ENCODE measurements at regions of chr6 and their contacts with region 1.

Region 1: GRCh38 chr6:90296346-90297114 is at the start of gene BACH2:
- DNase-seq: peak; percentile 97
- ATAC-seq: peak; percentile 76
- H3K4me3 ChIP-seq: peak within 1 kb of the TSS; percentile 61 to 95 (median 79)
- H3K4me3 Mint-ChIP-seq: peak within 1 kb of the TSS; percentile 89
- H3K27ac ChIP-seq: peak within 1 kb of the TSS; percentile 94
- H3K27ac Mint-ChIP-seq: peak within 1 kb of the TSS; percentile 96
- H3K4me1 ChIP-seq: peaks cover 47 to 51% of the 10 kb centered on the region in 2 donors
- H3K4me1 Mint-ChIP-seq: peaks cover 50% of the 10 kb centered on the region
- H3K27me3 ChIP-seq: no peaks in the 10 kb centered on the region
- H3K27me3 Mint-ChIP-seq: no peaks in the 10 kb centered on the region
- CTCF ChIP-seq: no peak
- total RNA-seq, gene BACH2: 235 and 254 TPM in 2 replicates

Region 2: DNA sequence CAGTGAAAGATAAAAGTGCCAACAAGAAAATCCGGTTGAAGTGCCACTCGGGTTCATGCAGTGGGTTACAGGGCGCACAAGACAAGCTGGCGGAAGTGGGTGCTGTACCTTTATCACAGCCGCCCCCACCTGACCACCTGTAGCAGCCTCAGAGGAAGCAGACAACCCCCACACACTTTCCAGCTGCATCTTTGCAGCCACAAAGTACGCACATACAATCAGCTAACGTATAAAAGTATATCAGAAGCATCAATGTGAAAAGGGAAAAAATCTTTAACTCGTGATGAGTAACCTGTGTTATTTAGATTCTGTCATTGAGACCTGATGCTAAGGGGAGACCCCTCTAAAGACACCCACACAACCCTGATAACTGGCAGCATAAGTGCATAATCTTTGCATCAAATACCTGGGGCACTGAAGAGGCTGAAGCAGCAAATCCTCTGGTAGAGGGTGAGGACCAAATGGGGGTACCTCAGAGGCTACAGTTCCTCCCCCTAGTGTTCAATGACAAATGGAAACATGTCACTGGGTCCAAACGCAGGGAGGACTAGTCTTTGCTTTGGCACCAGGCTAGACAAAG is 22.0 kb before region 1 on chr6:
- CTCF ChIA-PET with region 1: interaction called, 11 read pairs
- POLR2A ChIA-PET with region 1: interaction called, 7 read pairs
- intact Hi-C with region 1: loop called (anchors 1 kb)
- DNase-seq: peak; percentile 94
- ATAC-seq: peak; percentile 92
- H3K4me3 ChIP-seq: peak overlapping the region in 1 of 5 experiments; percentile 11
- H3K4me3 Mint-ChIP-seq: peak overlapping the region; percentile 59
- H3K27ac ChIP-seq: peak overlapping the region; percentile 95 to 97
- H3K27ac Mint-ChIP-seq: peak overlapping the region; percentile 87
- H3K4me1 ChIP-seq: peaks cover 55 to 75% of the 10 kb centered on the region in 2 donors
- H3K4me1 Mint-ChIP-seq: peaks cover 84% of the 10 kb centered on the region
- H3K27me3 ChIP-seq: no peaks in the 10 kb centered on the region
- H3K27me3 Mint-ChIP-seq: no peaks in the 10 kb centered on the region
- CTCF ChIP-seq: peak; percentile 34

Region 3: GRCh38 chr6:90315354-90315950 is 18.9 kb after region 1 on chr6:
- CTCF ChIA-PET with region 1: interaction called, 9 read pairs
- POLR2A ChIA-PET with region 1: interaction called, 12 read pairs
- intact Hi-C with region 1: loop called (anchors 1 kb)
- DNase-seq: peak; percentile 84
- ATAC-seq: peak; percentile 85
- H3K4me3 ChIP-seq: peak overlapping the region in 3 of 5 experiments; percentile 16 to 40 (median 22)
- H3K4me3 Mint-ChIP-seq: peak overlapping the region; percentile 54
- H3K27ac ChIP-seq: peak overlapping the region; percentile 95
- H3K27ac Mint-ChIP-seq: peak overlapping the region; percentile 83
- H3K4me1 ChIP-seq: peaks cover 70 to 76% of the 10 kb centered on the region in 2 donors
- H3K4me1 Mint-ChIP-seq: peaks cover 71% of the 10 kb centered on the region
- H3K27me3 ChIP-seq: no peaks in the 10 kb centered on the region
- H3K27me3 Mint-ChIP-seq: no peaks in the 10 kb centered on the region
- CTCF ChIP-seq: no peak

Region 4: DNA sequence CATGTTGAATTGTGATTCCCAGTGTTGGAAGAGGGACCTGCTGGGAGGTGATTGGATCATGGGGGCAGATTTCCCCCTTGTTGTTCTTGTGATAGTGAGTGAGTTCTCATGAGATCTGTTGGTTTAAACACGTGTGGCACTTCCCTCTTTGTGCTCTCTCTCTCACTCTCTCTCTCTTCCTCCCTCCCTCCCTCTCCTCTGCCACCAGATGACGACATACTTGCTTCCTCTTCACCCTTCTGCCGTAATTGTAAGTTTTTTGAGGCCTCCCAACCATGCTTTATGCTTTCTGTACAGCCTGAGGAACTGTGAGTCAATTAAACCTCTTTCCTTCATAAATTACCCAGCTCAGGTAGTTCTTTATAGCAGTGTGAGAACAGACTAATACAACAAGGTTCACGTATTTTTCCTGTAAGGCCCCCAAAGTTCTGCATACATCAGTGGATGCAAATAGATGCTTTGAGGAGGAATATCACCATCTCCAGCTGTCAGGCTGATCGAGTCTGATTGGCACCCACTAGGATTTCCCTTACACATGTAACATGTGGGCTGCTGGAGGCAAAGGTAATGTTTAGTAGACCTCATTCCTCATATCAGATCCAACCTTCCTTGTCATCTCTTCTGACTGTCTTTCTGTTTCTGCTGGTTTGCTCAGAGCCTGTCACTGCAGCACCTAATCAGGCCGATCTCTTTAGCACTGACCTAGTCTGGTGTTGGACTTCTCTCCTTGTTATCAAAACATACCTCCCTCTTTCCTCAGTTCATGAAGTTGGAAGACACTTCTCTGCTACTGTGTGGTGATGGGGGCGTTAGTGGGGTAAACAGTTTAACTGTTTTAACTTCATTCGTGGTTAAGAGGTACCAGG is 54.4 kb after region 1 on chr6:
- CTCF ChIA-PET with region 1: interaction called, 4 read pairs
- POLR2A ChIA-PET with region 1: no interaction called
- intact Hi-C with region 1: loop called (anchors 1 kb)
- DNase-seq: peak; percentile 92
- ATAC-seq: peak; percentile 96
- H3K4me3 ChIP-seq: peak overlapping the region in 2 of 5 experiments; percentile 5 to 38
- H3K4me3 Mint-ChIP-seq: peak overlapping the region; percentile 54
- H3K27ac ChIP-seq: peak overlapping the region; percentile 83 to 95
- H3K27ac Mint-ChIP-seq: peak overlapping the region; percentile 86
- H3K4me1 ChIP-seq: peaks cover 27% of the 10 kb centered on the region in 2 donors
- H3K4me1 Mint-ChIP-seq: peaks cover 36% of the 10 kb centered on the region
- H3K27me3 ChIP-seq: no peaks in the 10 kb centered on the region
- H3K27me3 Mint-ChIP-seq: no peaks in the 10 kb centered on the region
- CTCF ChIP-seq: no peak

Region 5: DNA sequence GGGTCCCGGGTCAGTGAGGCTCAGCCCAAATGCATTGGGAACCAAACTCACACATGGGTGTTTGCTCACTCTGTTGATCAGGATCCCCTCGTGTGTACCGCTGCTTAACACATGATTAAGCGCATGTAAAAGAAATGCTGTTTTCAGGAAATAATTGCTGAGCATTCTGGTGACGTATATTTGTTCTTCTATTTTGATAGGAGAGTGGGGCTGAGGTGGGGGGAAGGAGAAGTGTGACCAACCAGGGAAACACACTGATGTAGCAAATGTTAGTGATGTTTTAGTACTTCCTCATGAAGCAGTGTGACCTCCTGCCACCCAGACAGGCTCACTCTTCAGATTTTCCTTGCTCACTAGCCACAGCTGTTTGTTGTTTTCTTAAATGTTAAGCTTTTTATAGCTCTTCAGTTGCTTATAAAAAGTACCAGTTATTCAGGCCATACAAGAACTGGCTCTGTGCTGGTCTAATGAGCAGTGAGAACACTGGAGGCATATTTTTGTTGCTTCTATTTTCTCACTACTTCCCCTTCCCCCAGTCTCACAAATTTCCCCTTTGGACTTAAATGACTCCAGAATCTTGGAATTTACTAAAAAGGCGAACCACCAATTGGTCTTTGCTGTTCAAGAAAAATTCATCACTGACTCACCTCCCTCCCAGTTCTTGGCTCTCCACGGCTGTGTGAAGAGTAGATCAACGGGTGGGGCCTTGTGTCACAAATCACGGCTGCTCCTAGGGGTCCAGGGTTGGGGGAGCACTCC is 79.3 kb after region 1 on chr6:
- CTCF ChIA-PET with region 1: interaction called, 15 read pairs
- POLR2A ChIA-PET with region 1: interaction called, 35 read pairs
- intact Hi-C with region 1: loop called (anchors 1 kb)
- DNase-seq: peak; percentile 95
- ATAC-seq: peak; percentile 95
- H3K4me3 ChIP-seq: peak overlapping the region in 4 of 5 experiments; percentile 16 to 48 (median 29)
- H3K4me3 Mint-ChIP-seq: peak overlapping the region; percentile 79
- H3K27ac ChIP-seq: peak overlapping the region; percentile 94 to 98
- H3K27ac Mint-ChIP-seq: peak overlapping the region; percentile 96
- H3K4me1 ChIP-seq: peaks cover 39 to 45% of the 10 kb centered on the region in 2 donors
- H3K4me1 Mint-ChIP-seq: peaks cover 64% of the 10 kb centered on the region
- H3K27me3 ChIP-seq: no peaks in the 10 kb centered on the region
- H3K27me3 Mint-ChIP-seq: no peaks in the 10 kb centered on the region
- CTCF ChIP-seq: no peak

Region 6: DNA sequence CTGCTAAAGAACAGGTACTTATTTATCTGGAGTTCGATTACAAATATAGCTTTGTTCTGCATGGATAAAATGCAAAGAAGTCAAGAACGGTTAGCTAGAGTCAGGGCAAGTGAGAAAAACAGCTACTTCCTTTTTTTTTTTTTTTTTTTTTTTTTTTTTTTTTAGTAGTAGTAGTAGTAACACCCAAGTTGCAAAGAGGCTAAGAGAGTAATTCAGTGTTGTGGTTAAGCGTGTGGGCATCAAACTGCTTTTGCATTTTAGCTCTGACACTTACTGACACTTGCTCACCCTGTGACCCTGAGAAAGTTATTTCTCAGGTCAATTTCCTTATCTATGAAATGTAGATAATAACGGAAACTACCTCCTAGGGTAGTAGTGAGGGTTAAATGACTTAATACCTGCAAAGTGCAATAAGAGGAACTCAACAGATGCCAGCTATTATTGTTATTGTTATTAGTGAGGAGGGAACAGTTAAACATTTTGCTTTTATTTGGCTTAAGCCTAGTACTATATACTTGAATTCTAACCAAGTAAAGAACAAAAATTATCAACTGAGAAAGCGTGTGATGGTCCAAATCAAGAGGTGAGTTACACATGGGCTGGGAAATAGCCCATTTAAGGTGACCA is 86.8 kb after region 1 on chr6:
- CTCF ChIA-PET with region 1: interaction called, 89 read pairs
- POLR2A ChIA-PET with region 1: no interaction called
- intact Hi-C with region 1: loop called (anchors 2 kb)
- DNase-seq: peak; percentile 86
- ATAC-seq: peak; percentile 84
- H3K4me3 ChIP-seq: peak overlapping the region in 2 of 5 experiments; percentile 19 to 50
- H3K4me3 Mint-ChIP-seq: peak overlapping the region; percentile 78
- H3K27ac ChIP-seq: peak overlapping the region; percentile 65 to 93
- H3K27ac Mint-ChIP-seq: peak overlapping the region; percentile 92
- H3K4me1 ChIP-seq: peaks cover 72 to 74% of the 10 kb centered on the region in 2 donors
- H3K4me1 Mint-ChIP-seq: peaks cover 79% of the 10 kb centered on the region
- H3K27me3 ChIP-seq: no peaks in the 10 kb centered on the region
- H3K27me3 Mint-ChIP-seq: no peaks in the 10 kb centered on the region
- CTCF ChIP-seq: no peak

Region 7: DNA sequence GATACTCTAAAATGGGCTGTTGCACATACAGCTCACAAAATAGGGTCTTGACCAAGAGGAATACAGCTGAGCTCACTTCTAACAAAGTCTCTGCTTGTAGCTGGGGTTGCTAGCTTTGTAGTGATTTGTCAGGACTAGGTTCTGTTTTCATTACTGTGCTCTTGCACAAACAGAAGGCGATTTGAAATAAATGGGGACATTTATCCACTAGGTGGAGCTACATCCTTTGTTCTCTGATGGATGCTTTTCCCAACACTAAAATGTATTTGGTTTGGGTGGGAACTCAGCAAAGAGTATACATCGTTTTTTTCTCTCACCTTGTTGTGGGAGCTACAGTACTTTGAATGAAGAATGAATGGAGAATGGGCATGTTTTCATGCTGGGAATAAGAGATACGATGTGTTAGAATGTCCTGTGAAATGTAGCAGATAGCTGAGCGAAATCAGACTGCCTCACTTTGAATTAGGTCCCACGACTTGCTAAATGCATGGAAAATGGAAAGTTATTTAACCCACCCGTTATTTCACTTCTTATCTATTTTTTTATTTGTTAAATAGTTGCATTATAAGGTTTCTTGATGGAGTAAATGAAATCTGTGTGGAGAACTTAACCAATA is 785.0 kb after region 1 on chr6:
- CTCF ChIA-PET with region 1: no interaction called
- POLR2A ChIA-PET with region 1: no interaction called
- intact Hi-C with region 1: no loop called
- DNase-seq: peak; percentile 14
- ATAC-seq: no peak
- H3K4me3 ChIP-seq: no peak overlapping the region
- H3K4me3 Mint-ChIP-seq: no peak overlapping the region
- H3K27ac ChIP-seq: no peak overlapping the region
- H3K27ac Mint-ChIP-seq: no peak overlapping the region
- H3K4me1 ChIP-seq: no peaks in the 10 kb centered on the region
- H3K4me1 Mint-ChIP-seq: no peaks in the 10 kb centered on the region
- H3K27me3 ChIP-seq: no peaks in the 10 kb centered on the region
- H3K27me3 Mint-ChIP-seq: no peaks in the 10 kb centered on the region
- CTCF ChIP-seq: peak; percentile 67

Measured in B cell (primary cell).